Activated CD4-positive, alpha-beta T cell treated with anti-CD3 and anti-CD28 coated beads for 36 hours (primary cell): ENCODE measurements at regions of chr2 and their contacts with region 1.

Region 1: GRCh38 chr2:28276076-28276618 is 116.5 kb upstream of the FOSL2 start:
- DNase-seq: peak; percentile 45
- ATAC-seq: peak; percentile 97
- H3K4me3 Mint-ChIP-seq: no peak overlapping the region
- H3K27ac Mint-ChIP-seq: peak overlapping the region; percentile 15
- H3K4me1 Mint-ChIP-seq: peaks cover 51% of the 10 kb centered on the region
- H3K27me3 Mint-ChIP-seq: no peaks in the 10 kb centered on the region

Region 2: DNA sequence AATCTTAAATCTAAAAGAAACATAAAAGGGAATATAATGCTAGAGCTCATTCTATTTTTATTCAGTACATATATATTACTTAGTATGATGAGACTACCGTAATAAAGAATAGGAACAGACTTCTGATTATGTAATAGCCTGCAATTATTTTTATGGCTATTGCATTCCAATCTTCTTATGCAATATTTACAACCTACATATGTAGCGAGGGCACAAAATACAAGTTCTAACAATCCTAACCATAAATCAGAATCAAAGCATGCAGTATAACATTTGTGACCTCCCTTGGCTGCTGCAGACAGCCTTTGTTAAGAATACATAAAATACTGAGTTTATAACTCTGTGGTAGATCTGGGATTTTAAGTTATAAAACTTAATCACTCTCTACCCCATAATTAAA is 208.1 kb before region 1 on chr2:
- CTCF ChIA-PET with region 1: no interaction called
- POLR2A ChIA-PET with region 1: no interaction called
- intact Hi-C with region 1: no loop called
- DNase-seq: no peak
- ATAC-seq: no peak
- H3K4me3 Mint-ChIP-seq: no peak overlapping the region
- H3K27ac Mint-ChIP-seq: no peak overlapping the region
- H3K4me1 Mint-ChIP-seq: peaks cover 12% of the 10 kb centered on the region
- H3K27me3 Mint-ChIP-seq: no peaks in the 10 kb centered on the region

Region 3: DNA sequence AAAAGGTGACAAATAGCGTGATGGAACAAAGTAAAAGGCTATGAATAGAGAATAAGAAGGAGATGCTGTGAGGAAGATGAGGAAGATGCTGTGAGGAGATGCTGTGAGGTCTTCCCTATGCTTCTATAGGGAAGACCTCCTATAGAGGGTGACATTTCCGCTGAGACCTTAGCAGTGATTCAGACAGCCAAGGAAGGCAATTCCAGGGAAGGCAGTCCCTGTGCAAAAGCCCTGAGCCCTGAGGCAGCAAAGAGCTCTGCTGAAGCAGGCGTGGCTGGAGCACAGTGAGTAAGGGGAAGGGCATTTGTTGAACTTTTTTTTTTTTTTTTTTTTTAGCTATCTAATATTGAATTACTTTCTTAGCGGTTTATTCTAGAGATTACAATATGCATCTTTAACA is 26.1 kb before region 1 on chr2:
- CTCF ChIA-PET with region 1: interaction called, 3 read pairs
- POLR2A ChIA-PET with region 1: no interaction called
- intact Hi-C with region 1: loop called (anchors 1 kb)
- DNase-seq: no peak
- ATAC-seq: no peak
- H3K4me3 Mint-ChIP-seq: no peak overlapping the region
- H3K27ac Mint-ChIP-seq: no peak overlapping the region
- H3K4me1 Mint-ChIP-seq: peaks cover 27% of the 10 kb centered on the region
- H3K27me3 Mint-ChIP-seq: no peaks in the 10 kb centered on the region

Region 4: GRCh38 chr2:28359222-28360065 is 83.3 kb after region 1 on chr2:
- CTCF ChIA-PET with region 1: no interaction called
- POLR2A ChIA-PET with region 1: interaction called, 6 read pairs
- intact Hi-C with region 1: loop called in 1 of 2 experiments (anchors 2 kb)
- DNase-seq: peak; percentile 89
- ATAC-seq: peak; percentile 81
- H3K4me3 Mint-ChIP-seq: peak overlapping the region; percentile 53
- H3K27ac Mint-ChIP-seq: peak overlapping the region; percentile 94
- H3K4me1 Mint-ChIP-seq: peaks cover 67% of the 10 kb centered on the region
- H3K27me3 Mint-ChIP-seq: peaks cover 4% of the 10 kb centered on the region

Region 5: DNA sequence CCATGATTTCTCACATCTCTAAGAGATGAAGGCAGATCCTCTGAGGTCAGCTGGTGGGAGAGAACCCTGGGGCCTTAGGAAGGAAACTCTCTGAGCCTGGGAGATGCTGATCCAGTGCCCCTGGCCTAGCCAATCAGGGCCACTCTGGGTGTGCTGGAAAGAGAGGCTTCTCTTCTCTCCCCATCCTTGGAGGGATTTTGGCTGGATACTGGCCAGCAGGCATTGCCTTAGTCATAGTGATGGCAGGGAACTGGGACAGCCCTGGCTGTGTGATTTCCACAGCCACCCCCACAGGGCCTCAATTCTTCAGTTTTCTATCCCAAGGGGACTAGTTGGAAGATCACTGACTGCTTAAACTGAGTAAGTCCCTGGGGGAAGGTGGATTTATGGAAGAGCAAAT is 193.2 kb after region 1 on chr2:
- CTCF ChIA-PET with region 1: no interaction called
- POLR2A ChIA-PET with region 1: interaction called, 4 read pairs
- intact Hi-C with region 1: loop called in 1 of 2 experiments (anchors 5 kb)
- DNase-seq: no peak
- ATAC-seq: no peak
- H3K4me3 Mint-ChIP-seq: no peak overlapping the region
- H3K27ac Mint-ChIP-seq: no peak overlapping the region
- H3K4me1 Mint-ChIP-seq: peaks cover 50% of the 10 kb centered on the region
- H3K27me3 Mint-ChIP-seq: peaks cover 3% of the 10 kb centered on the region

Region 6: GRCh38 chr2:29262681-29263260 is 986.6 kb after region 1 on chr2:
- CTCF ChIA-PET with region 1: no interaction called
- POLR2A ChIA-PET with region 1: no interaction called
- intact Hi-C with region 1: no loop called
- DNase-seq: no peak
- ATAC-seq: no peak
- H3K4me3 Mint-ChIP-seq: no peak overlapping the region
- H3K27ac Mint-ChIP-seq: no peak overlapping the region
- H3K4me1 Mint-ChIP-seq: no peaks in the 10 kb centered on the region
- H3K27me3 Mint-ChIP-seq: peaks cover 23% of the 10 kb centered on the region